Psoas muscle (tissue), 8 donors: ENCODE measurements at regions of chr1 and their contacts with region 1.

Region 1: GRCh38 chr1:66624412-66625060 is 90.6 kb downstream of the SGIP1 start:
- DNase-seq: no peak
- ATAC-seq: no peak
- H3K4me3 ChIP-seq: no peak overlapping the region
- H3K27ac ChIP-seq: no peak overlapping the region
- H3K4me1 ChIP-seq: no peaks in the 10 kb centered on the region
- H3K27me3 ChIP-seq: no peaks in the 10 kb centered on the region
- CTCF ChIP-seq: no peak

Region 2: DNA sequence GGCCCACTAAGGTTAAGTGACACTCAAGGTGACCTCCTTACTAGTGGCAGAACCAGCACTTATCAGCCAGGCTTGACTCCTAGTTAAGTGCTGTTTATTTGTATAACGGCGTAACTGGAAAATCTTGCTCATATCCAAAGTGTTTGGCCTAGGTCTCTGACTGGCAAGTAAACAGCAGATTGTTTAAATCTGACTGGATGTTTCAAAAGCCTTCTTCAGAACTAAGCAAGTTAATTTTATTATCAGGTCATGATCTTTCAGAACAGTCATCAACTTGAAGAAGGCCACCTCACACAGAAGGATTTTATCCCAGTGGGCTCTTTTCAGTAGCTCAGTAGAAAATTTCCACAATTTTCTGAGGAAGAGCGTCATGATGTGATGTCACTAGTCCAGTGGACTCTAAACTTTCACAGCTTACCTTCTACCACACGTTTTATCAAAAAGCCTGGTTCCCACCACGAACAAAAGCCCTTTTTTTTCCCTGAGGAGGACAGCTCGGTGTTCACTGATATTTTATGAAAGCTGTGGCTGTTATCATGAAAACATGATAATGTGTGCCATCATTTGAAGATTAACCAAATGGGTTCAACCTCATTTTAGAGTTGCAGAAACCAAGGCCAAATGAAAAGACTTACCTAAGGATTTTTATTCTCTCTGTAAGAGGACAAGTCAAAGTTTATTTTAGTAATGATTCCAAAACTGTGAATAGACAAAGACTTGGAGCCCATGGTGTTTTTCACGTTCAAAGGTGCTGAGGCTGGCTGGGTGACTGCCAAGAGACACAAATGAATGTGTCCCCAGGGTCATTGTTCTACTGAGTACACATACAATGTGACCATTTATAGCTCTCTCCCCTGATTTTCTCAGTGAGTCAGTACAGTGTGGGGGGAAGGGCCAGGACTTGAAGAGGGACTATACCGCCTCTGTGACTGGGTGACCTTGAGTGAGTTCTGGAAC is 81.4 kb before region 1 on chr1:
- intact Hi-C with region 1: no loop called
- DNase-seq: peak in 1 of 2 donors; percentile 29
- ATAC-seq: peak in 3 of 4 donors; percentile 56 to 62 (median 61)
- H3K4me3 ChIP-seq: no peak overlapping the region
- H3K27ac ChIP-seq: peak overlapping the region; percentile 57
- H3K4me1 ChIP-seq: no peaks in the 10 kb centered on the region
- H3K27me3 ChIP-seq: no peaks in the 10 kb centered on the region
- CTCF ChIP-seq: no peak

Region 3: GRCh38 chr1:66685670-66686069 is 61.1 kb after region 1 on chr1:
- intact Hi-C with region 1: loop called in 1 of 2 experiments (anchors 10 kb)
- DNase-seq: no peak
- ATAC-seq: no peak
- H3K4me3 ChIP-seq: no peak overlapping the region
- H3K27ac ChIP-seq: no peak overlapping the region
- H3K4me1 ChIP-seq: no peaks in the 10 kb centered on the region
- H3K27me3 ChIP-seq: no peaks in the 10 kb centered on the region
- CTCF ChIP-seq: no peak